PC-3 (cell line): ENCODE measurements at regions of chr14 and their contacts with region 1.

Region 1: GRCh38 chr14:52596320-52596719 is 43.7 kb downstream of the GPR137C start:
- DNase-seq: no peak
- ATAC-seq: no peak
- H3K4me3 ChIP-seq: no peak overlapping the region
- H3K27ac ChIP-seq: no peak overlapping the region
- H3K4me1 ChIP-seq: no peaks in the 10 kb centered on the region
- H3K27me3 ChIP-seq: no peaks in the 10 kb centered on the region
- CTCF ChIP-seq: no peak

Region 2: DNA sequence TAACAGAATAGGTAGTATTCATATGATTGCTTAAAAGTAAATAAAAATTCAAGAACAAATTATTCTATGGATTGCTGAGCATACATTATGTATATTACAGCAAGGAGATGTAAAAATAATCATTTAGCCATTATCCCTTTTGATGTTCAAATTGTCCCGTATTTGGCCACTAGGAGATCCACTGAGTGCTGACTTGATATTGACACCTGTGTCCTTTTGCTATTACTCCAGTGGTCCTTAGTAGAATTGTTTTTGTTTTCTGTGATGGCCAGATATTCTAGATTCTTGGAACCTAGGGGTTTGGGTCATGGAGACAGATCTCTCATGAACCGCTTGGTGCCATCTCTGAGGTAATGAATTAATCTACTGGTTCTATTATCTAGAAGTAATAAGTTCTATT is 82.3 kb after region 1 on chr14:
- CTCF ChIA-PET with region 1: no interaction called
- POLR2A ChIA-PET with region 1: no interaction called
- intact Hi-C with region 1: no loop called
- DNase-seq: peak; percentile 56
- ATAC-seq: peak; percentile 80
- H3K4me3 ChIP-seq: no peak overlapping the region
- H3K27ac ChIP-seq: no peak overlapping the region
- H3K4me1 ChIP-seq: no peaks in the 10 kb centered on the region
- H3K27me3 ChIP-seq: no peaks in the 10 kb centered on the region
- CTCF ChIP-seq: peak; percentile 76

Region 3: DNA sequence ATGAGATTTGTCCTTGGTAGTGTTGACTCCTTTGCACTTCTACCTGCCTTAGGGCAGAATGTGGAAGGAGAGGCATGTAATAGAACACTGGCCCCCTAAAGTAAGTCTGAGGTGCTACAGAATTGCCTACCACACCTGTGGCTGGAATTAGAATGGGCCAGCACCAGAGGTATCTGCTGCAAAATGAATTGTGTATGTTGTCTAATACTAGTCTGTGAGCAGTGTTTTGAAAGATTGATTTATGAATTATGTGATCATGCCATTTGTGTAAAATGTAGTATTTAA is 128.0 kb after region 1 on chr14:
- CTCF ChIA-PET with region 1: no interaction called
- POLR2A ChIA-PET with region 1: interaction called, 16 read pairs
- intact Hi-C with region 1: no loop called
- DNase-seq: no peak
- ATAC-seq: no peak
- H3K4me3 ChIP-seq: no peak overlapping the region
- H3K27ac ChIP-seq: no peak overlapping the region
- H3K4me1 ChIP-seq: no peaks in the 10 kb centered on the region; the same call in 1 of the 2 replicates
- H3K27me3 ChIP-seq: no peaks in the 10 kb centered on the region
- CTCF ChIP-seq: no peak